SK-N-SH (cell line): ENCODE measurements at regions of chr2 and their contacts with region 1.

Region 1: DNA sequence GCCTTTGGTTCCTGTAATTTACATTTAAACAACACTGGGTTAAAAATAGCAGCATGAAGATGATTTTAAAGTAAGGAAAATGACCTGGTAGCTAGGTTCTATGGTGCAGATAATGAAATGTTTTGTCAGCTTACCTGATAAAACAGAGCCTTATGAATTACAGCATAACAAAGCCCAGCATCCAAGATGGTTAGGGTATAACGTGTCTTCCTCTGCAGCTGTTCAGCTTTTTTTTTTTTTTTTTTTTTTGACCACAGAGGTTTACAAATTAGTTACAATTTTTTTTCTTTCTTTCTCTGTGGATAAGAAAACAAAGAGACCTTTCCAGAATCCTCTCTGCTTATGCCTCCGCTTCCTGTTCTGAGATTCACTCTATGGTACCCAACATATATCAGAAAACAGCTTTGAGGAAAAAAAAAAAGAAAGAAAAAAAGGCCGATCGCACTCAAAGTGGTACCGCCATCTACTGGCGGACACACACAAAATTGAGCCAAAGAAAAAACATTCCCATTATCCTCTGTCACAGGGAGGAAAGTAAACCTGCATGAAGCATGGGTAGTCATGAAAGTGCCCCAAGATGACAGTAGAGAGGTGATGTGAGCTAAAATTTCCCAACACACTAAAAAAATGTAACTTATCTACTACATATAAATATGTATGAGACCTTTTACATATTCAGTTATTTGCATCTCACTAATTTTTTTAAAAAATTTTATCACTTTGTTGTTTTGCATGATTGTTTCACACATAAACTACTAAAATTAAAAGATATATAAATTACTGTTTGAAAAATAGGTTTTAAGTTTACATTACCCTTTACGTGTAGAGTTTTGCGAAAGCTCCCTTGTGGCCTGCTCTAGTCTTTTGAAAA is at the start of gene SCN3A:
- DNase-seq: peak; percentile 25
- H3K4me3 ChIP-seq: peak within 1 kb of the TSS; percentile 22 to 40; a peak in 3 of 4 replicates
- H3K27ac ChIP-seq: peak within 1 kb of the TSS in 1 of 2 experiments; percentile 72; a peak in 2 of 4 replicates
- H3K4me1 ChIP-seq: no peaks in the 10 kb centered on the region; a peak in 2 of 4 replicates
- H3K27me3 ChIP-seq: no peaks in the 10 kb centered on the region
- CTCF ChIP-seq: peak; percentile 87
- EP300 ChIP-seq: no peak
- RAD21 ChIP-seq: peak; percentile 93
- polyA plus RNA-seq, gene SCN3A: 0.33 and 0.97 TPM in 2 replicates

Region 2: GRCh38 chr2:164061129-164061746 is 1142.7 kb before region 1 on chr2:
- CTCF ChIA-PET with region 1: no interaction called
- POLR2A ChIA-PET with region 1: no interaction called
- DNase-seq: peak; percentile 14
- H3K4me3 ChIP-seq: no peak overlapping the region; a peak in 1 of 4 replicates
- H3K27ac ChIP-seq: no peak overlapping the region
- H3K4me1 ChIP-seq: no peaks in the 10 kb centered on the region; a peak in 2 of 4 replicates
- H3K27me3 ChIP-seq: no peaks in the 10 kb centered on the region
- CTCF ChIP-seq: peak; percentile 79
- EP300 ChIP-seq: no peak
- RAD21 ChIP-seq: peak; percentile 71

Region 3: DNA sequence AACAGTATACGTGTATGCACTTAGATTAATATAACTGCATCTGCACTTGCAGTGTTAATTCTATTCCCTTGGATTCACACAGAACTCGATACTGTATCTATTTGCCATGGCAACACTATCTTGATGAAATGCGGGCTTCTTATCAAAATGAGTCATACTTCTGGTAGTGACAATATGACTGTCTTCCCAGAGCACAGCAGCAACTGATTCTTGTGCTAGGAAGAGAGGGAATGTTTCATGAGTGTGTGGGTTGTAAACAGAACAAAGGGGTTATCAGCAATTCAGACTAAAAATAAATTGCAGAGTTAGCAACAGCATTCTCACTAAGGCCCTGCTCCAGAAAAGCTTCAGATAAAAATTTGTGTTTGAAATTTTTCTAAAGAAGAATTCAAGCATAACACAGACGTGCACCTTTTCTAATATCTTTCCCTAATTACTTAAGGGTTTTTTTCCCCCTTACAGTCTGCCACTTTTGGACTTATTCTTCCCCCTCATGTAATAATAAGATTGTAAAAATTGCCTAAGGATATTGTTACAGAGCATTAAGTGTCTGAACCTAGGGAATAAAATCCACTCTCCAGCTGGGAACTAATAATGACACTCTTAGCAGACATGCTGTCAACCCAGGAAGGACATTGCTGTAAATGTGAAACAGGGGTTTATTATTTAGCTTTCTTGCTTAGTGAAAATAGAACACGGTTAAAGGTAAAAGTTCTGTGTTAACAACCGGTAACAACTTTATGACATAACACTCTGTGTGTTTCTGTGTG is 148.7 kb before region 1 on chr2:
- CTCF ChIA-PET with region 1: interaction called, 10 read pairs
- POLR2A ChIA-PET with region 1: no interaction called
- DNase-seq: peak; percentile 49
- H3K4me3 ChIP-seq: no peak overlapping the region; a peak in 1 of 4 replicates
- H3K27ac ChIP-seq: peak overlapping the region in 1 of 2 experiments; percentile 89; a peak in 2 of 4 replicates
- H3K4me1 ChIP-seq: peaks cover 0 to 11% of the 10 kb centered on the region in 2 experiments; a peak in 2 of 4 replicates
- H3K27me3 ChIP-seq: no peaks in the 10 kb centered on the region
- CTCF ChIP-seq: no peak
- EP300 ChIP-seq: peak in 1 of 2 experiments; percentile 53; a peak in 1 of 4 replicates
- RAD21 ChIP-seq: no peak

Region 4: DNA sequence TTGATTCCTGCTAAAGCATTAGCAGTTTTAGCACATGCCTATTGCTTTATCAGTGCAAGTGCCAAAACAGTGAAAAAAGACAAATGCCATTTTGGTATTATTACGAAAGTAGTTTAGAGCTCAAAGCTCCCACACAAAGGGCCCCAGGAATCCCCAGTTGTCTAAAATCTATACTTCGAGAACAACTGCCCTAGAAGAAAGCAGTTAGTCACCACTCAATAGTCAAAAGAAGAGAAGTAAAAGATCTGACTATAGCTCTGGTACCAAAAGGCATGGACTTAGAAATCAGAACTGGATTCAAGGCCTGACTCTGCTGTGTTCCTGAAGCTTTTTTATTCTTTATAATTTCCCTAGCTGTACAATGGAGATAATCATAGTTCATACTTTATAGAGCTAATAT is 21.9 kb before region 1 on chr2:
- CTCF ChIA-PET with region 1: interaction called, 20 read pairs
- POLR2A ChIA-PET with region 1: no interaction called
- DNase-seq: no peak
- H3K4me3 ChIP-seq: no peak overlapping the region
- H3K27ac ChIP-seq: no peak overlapping the region
- H3K4me1 ChIP-seq: peaks cover 0 to 10% of the 10 kb centered on the region in 2 experiments; a peak in 2 of 4 replicates
- H3K27me3 ChIP-seq: no peaks in the 10 kb centered on the region
- CTCF ChIP-seq: no peak
- EP300 ChIP-seq: no peak
- RAD21 ChIP-seq: no peak

Region 5: DNA sequence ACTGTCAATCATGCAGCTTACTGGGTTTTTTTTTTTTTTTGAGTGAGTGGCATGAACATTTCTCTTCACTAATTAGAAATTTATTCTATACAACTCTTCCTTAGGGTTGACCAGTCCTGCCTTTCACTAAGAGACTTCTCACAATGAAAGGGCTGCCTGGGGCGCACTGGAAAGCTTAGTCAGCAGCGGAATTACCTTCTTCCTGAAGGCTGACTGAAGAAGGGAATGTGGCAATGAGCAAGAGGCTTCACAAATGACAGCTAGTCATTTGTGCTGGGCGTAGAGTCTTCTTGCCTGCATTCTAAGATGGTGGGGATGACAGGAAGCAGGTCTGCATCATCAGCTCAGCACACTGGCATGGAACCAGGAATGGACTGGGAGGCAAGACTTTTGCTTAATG is 15.6 kb after region 1 on chr2:
- CTCF ChIA-PET with region 1: interaction called, 20 read pairs
- POLR2A ChIA-PET with region 1: no interaction called
- DNase-seq: no peak
- H3K4me3 ChIP-seq: no peak overlapping the region
- H3K27ac ChIP-seq: no peak overlapping the region
- H3K4me1 ChIP-seq: no peaks in the 10 kb centered on the region; a peak in 1 of 4 replicates
- H3K27me3 ChIP-seq: no peaks in the 10 kb centered on the region
- CTCF ChIP-seq: no peak
- EP300 ChIP-seq: no peak
- RAD21 ChIP-seq: no peak

Region 6: DNA sequence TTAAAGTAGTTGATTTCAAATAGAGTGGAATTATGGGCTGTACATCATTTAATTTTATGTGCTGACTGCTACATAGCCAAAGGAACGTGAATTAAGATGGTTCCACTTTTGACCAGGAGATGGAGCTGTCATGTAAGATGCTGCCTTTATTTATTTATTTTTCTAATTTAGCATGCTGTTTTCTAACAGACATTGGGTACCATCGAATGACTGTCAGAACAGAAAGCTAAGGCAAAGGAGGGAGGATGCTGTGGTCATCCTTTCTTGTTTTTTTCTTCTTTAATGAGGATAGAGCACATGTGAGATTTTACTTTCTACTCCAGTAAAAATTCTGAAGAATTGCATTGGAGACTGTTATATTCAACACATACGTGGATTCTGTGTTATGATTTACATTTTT is 35.3 kb after region 1 on chr2 and contains the start of gene SCN2A:
- CTCF ChIA-PET with region 1: interaction called, 15 read pairs
- POLR2A ChIA-PET with region 1: no interaction called
- DNase-seq: peak; percentile 33
- H3K4me3 ChIP-seq: peak within 1 kb of the TSS in 1 of 2 experiments; percentile 33; a peak in 3 of 4 replicates
- H3K27ac ChIP-seq: peak within 1 kb of the TSS in 1 of 2 experiments; percentile 68; a peak in 2 of 4 replicates
- H3K4me1 ChIP-seq: no peaks in the 10 kb centered on the region; a peak in 1 of 4 replicates
- H3K27me3 ChIP-seq: no peaks in the 10 kb centered on the region
- CTCF ChIP-seq: peak; percentile 85
- EP300 ChIP-seq: no peak
- RAD21 ChIP-seq: peak; percentile 91
- polyA plus RNA-seq, gene SCN2A: 5.1 and 7.3 TPM in 2 replicates